ENCODE measurements at regions of chr6 and their contacts with region 1.

Region 1: DNA sequence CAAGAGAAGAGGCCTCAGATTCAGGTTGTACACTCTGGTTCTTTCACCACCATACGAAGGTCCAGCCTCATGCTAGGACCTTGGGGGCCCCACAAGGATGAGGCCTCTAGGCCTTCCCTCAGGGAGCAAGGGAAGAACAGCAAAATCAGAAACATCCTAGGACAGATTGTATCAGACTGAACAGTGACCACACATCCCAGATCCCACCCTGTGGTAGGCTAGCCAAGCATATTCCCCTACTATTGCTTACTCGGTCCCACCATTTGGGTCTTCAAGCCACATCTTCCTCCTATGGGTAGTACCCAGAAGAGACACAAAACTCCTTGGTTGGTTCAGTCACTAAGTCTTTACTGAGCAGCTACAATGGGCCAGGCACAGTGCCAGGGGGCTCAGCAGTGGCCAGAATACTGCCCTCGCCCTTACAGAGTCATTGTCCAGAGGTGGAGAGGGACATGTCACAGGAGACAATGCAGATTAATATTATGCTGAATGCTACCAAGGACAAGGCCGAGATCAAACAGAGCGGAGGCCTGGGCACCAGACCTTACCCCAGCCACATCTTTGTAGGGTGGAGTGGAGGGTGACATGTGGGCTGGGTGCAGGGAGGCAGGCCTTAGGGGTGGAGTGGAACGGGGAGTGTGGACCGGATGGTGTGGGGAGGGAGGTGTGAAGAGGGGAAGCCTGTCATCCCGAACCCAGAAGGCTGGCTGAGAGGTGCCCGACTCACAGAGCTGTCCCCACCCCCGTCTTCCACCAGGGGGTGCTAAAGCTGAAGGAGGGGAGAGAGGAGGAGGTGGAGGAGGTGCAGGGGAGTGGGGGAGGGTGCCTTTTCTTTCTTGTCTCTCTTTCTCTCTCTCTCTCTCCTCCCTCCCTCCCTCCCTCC is 6.8 kb upstream of the MAPK13 start:
- DNase-seq: peak; percentile 95
- ATAC-seq: peak; percentile 77
- H3K4me3 Mint-ChIP-seq: peak overlapping the region; percentile 27
- H3K27ac Mint-ChIP-seq: peak overlapping the region; percentile 64
- H3K4me1 Mint-ChIP-seq: peaks cover 89% of the 10 kb centered on the region
- H3K27me3 Mint-ChIP-seq: no peaks in the 10 kb centered on the region

Region 2: DNA sequence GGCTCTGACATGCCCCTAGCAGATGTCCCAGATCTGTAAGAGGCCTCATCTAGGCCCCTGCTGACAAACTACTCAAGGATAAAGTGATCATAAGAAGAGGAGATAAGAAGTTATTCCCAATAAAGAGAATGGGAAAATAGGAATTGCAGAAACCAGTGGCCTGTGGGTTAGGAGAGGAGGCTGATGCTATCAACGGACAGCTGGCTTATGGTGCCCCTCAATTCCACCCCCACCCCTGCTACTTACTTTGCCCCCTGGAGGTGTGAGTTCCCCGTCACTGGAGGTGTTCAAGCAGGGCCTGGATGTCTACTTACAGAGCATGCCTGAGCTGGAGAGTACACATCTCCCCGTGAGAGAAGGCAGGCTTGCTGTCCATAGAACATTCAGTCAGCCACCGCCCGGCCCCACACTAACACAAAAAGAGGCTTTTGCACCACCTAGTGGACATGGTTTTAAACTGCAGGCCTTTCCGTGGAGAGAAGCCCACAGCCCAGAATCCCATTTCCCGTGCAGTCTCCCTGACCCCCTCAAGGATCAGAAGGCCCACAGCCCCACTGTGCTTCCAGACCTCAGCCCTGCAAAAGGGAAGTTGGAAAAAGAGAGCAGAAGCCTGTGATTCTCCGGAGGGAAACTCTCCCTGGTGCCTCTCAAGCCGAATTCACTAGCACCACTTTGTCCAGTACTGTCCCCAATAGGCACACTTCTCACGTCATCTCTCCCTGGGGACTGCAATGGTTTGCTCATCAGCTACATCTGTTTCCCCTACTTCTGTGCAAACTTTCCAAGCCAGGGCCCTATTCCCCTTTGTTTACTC is 236.9 kb after region 1 on chr6:
- CTCF ChIA-PET with region 1: no interaction called
- POLR2A ChIA-PET with region 1: no interaction called
- intact Hi-C with region 1: loop called (anchors 1 to 2 kb)
- DNase-seq: peak; percentile 85
- ATAC-seq: peak; percentile 81
- H3K4me3 Mint-ChIP-seq: no peak overlapping the region
- H3K27ac Mint-ChIP-seq: no peak overlapping the region
- H3K4me1 Mint-ChIP-seq: peaks cover 22% of the 10 kb centered on the region
- H3K27me3 Mint-ChIP-seq: peaks cover 6% of the 10 kb centered on the region

Region 3: DNA sequence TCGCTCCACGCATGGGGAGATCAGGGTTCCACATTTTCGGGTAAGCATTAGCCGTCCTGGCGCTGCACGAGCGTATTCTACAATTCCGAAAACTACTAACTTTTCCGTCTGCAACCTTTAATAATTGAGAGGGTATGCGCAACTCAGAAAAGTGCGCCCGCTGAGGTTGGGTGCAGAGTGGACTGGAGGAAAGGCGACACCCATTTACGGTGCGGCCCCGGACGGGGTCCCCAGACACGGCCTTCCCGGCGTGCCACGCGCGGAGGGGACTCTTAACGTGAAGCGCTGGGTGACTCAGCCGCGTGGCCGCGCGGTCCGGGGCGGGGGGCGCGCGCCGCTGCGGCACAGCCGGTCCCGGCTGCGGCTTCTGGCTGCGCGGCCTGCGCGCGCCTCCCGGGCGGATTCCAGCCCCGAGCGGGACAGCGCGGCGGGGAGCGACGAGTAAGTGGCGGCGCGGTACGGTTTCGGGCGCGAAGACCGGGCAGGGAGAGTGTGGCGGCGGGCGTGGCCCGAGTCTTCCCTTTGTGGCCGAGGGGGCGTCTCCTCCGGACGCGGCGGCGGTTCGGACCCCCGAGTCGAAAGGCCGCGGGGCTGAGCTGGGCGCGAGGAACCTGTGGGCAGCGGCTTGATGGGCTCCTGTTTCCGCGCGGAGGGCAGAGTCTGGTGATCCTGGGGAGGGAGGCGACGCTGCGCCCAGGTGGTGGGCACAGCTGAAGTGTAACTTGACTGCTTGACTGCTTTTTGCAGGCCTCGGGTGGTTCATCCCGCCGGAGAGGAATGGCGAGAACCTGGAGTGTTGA is 319.4 kb after region 1 on chr6 and contains the starts of genes KCTD20 and PXT1:
- CTCF ChIA-PET with region 1: interaction called, 3 read pairs
- POLR2A ChIA-PET with region 1: no interaction called
- intact Hi-C with region 1: loop called in 1 of 2 experiments (anchors 5 kb)
- DNase-seq: peak; percentile 94
- ATAC-seq: peak; percentile 78
- H3K4me3 Mint-ChIP-seq: peak within 1 kb of the TSS; percentile 95
- H3K27ac Mint-ChIP-seq: peak within 1 kb of the TSS; percentile 97
- H3K4me1 Mint-ChIP-seq: peaks cover 27% of the 10 kb centered on the region
- H3K27me3 Mint-ChIP-seq: no peaks in the 10 kb centered on the region
- total RNA-seq, gene KCTD20: 46.5 to 50.6 TPM
- total RNA-seq, gene PXT1: 0.11 to 0.14 TPM

Measured in activated CD4-positive, alpha-beta T cell treated with anti-CD3 and anti-CD28 coated beads for 36 hours (primary cell).